ENCODE measurements at regions of chr1 and their contacts with region 1.

Region 1: GRCh38 chr1:84433258-84434080 is 35.2 kb downstream of the DNASE2B start:
- DNase-seq: no peak
- H3K4me3 ChIP-seq: peak overlapping the region in 1 of 2 donors; percentile 17
- H3K27ac ChIP-seq: no peak overlapping the region
- H3K4me1 ChIP-seq: no peaks in the 10 kb centered on the region
- H3K27me3 ChIP-seq: no peaks in the 10 kb centered on the region
- CTCF ChIP-seq: peak; percentile 72 to 82 (median 77)
- POLR2A ChIP-seq: no peak

Region 2: GRCh38 chr1:83931658-83932253 is 501.7 kb before region 1 on chr1:
- intact Hi-C with region 1: loop called (anchors 5 kb)
- DNase-seq: no peak
- H3K4me3 ChIP-seq: no peak overlapping the region
- H3K27ac ChIP-seq: no peak overlapping the region
- H3K4me1 ChIP-seq: no peaks in the 10 kb centered on the region
- H3K27me3 ChIP-seq: no peaks in the 10 kb centered on the region
- CTCF ChIP-seq: peak; percentile 27 to 61 (median 46)
- POLR2A ChIP-seq: no peak

Region 3: DNA sequence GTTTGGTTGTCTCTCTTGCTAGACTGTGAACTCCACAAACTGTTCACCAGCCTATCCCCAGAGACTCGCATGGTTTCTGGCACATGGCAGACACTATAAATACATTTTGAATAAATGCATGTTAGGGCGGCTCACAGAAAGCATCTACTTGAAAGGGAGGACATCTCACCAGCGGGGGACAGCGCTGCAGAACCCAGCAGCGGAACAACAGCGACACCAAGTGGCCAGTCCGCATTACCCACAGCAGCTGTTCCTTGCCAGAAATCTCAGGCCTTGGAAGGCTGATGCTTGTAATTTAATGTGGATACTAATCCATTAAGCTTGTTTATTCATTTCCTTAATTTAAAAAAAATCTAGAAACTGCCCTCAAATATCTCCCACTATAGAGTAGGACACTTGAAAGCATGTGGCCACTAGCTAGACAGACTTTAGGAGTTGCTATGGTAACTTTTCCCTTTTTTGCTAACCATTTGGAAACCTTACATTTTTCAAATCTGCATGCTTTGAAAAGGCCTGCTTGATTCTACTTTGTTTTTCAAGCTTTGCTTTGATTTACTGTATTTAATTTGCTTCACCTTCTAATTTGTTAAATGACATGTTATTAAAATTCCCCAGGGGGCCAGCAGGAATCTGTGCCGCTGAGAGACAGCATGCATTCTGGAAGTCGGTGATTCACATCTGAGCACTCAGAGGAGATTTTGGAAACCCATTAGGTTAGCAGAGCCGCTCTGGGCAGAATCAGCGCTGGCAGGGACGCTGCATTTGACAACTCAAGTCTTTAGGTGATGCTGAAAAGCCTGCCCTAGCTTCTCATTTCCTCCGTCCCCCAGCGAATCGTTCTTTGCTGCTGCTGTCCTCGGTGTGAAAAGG is 320.3 kb after region 1 on chr1:
- intact Hi-C with region 1: loop called (anchors 10 kb)
- DNase-seq: peak in 1 of 2 donors; percentile 78
- H3K4me3 ChIP-seq: no peak overlapping the region
- H3K27ac ChIP-seq: no peak overlapping the region
- H3K4me1 ChIP-seq: peaks cover 5% of the 10 kb centered on the region
- H3K27me3 ChIP-seq: no peaks in the 10 kb centered on the region
- CTCF ChIP-seq: peak; percentile 70 to 88 (median 79)
- POLR2A ChIP-seq: no peak

Measured in vagina (tissue), 2 donors.